ENCODE measurements at regions of chr11 and their contacts with region 1.

Region 1: DNA sequence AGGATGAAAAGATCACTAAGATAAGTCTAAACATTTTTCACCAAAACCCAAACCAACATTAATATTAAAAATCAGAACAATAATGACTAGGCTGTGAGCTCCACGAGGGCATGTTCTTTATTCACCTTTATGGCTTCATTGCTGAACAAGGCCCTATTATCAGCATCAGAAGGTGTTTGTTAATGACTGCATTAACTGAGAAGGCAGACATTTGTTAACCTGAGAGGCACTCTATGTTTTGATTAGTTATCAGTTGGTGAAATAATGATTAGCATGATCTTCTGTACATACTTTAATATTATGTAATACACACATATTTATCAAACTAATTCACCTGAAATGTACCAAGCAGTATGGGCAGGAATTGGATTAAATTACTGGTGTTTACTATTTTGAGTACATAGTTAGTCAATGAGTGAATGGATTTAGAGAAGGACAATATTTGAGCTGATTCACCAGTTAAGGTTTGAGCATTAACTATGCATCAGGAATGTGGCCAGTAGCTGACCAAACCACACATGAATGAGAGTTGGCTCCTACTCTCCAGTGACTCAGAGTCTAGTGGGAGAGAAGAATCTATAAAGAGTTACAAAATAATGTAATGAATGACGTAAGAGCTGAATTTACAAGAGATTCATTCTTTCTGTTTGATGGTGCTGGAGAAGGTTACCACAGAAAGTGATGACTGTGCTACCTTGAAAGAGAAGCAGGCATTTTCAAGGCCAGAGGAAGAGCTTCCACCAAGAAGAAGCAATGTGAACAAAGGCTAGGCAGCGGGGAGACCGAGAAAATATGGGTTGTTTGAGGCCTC is 6.7 kb downstream of the IL18 start:
- H3K4me3 ChIP-seq: no peak overlapping the region
- H3K27ac ChIP-seq: no peak overlapping the region
- H3K4me1 ChIP-seq: no peaks in the 10 kb centered on the region
- CTCF ChIP-seq: no peak

Region 2: GRCh38 chr11:112174789-112175598 is 17.8 kb after region 1 on chr11 and contains the start of gene BCO2:
- CTCF ChIA-PET with region 1: interaction called, 11 read pairs
- POLR2A ChIA-PET with region 1: no interaction called
- H3K4me3 ChIP-seq: peak within 1 kb of the TSS; percentile 2
- H3K27ac ChIP-seq: no peak within 1 kb of the TSS
- H3K4me1 ChIP-seq: peaks cover 3% of the 10 kb centered on the region; the same call in 1 of the 2 replicates
- CTCF ChIP-seq: peak; percentile 70

Region 3: DNA sequence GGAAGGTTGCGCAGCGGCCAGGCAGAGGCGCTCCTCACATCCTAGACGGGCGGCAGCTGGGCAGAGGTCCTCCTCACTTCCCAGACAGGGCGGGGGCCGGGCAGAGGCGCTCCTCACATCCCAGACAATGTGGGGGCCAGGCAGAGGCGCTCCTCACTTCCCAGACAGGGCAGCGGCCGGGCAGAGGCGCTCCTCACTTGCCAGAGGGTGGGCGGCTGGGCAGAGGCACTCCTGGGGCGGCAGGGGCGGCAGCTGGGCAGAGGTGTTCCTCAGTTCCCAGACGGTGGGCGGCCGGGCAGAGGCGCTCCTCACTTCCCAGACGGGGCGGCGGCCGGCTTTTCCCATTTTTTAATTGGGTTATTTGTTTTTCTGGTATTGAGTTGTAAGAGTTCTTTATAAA is 48.9 kb after region 1 on chr11:
- CTCF ChIA-PET with region 1: no interaction called
- POLR2A ChIA-PET with region 1: no interaction called
- H3K4me3 ChIP-seq: no peak overlapping the region
- H3K27ac ChIP-seq: no peak overlapping the region
- H3K4me1 ChIP-seq: no peaks in the 10 kb centered on the region
- CTCF ChIP-seq: no peak